ENCODE measurements at regions of chr1 and their contacts with region 1.

Region 1: GRCh38 chr1:156338180-156338973 is at the starts of genes CCT3 and TSACC:
- DNase-seq: peak; percentile 97 to 100 (median 99)
- ATAC-seq: peak; percentile 95
- H3K4me3 ChIP-seq: peak within 1 kb of the TSS; percentile 69 to 85
- H3K4me3 Mint-ChIP-seq: peak within 1 kb of the TSS; percentile 95
- H3K27ac ChIP-seq: peak within 1 kb of the TSS; percentile 61 to 92
- H3K27ac Mint-ChIP-seq: peak within 1 kb of the TSS; percentile 95
- H3K4me1 ChIP-seq: peaks cover 25% of the 10 kb centered on the region
- H3K4me1 Mint-ChIP-seq: peaks cover 39% of the 10 kb centered on the region
- H3K27me3 ChIP-seq: no peaks in the 10 kb centered on the region
- H3K27me3 Mint-ChIP-seq: no peaks in the 10 kb centered on the region
- CTCF ChIP-seq: no peak
- total RNA-seq, gene CCT3: 49.2 to 53.4 TPM
- total RNA-seq, gene TSACC: 0.46 TPM in 1 of 2 experiments, not detected in the other

Region 2: DNA sequence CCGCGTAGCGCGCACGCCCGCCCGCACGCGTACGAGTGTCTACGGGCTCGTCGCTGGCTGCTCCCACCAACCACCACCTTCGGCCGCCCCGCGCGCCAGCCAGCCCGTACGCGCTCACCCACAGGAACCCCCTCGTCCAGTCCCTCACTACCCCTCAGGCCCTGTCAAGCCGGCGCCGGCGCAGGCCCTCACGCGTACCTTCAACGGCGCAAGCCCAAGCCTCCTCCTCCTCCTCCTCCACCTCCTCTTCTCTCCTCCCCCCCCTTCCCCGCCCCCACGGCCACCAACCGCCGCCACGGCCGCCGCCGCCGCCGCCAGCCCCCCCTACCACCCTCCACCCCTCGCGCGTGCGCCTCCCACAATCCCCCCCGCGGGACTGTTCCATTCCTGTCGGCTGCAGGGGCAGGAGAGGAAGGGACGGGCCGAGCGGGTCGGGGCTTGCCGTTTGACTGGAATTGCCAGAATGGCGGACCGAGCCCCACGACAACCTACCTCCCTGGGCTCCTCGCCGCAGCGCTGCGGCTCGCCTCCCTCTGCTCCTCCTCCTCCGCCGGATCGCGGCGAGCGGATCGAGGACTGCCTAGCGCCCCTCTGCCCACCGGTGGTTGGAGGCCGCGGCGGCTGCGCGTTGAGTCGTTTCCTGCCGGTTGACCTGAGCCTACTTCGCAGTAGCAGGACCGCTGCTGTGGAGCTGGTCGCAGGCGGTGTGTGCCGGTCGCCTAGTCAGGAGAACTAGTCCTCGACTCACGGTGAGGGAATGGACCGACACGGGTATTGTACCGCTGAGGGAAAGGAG is 775.6 kb before region 1 on chr1 and contains the start of gene ASH1L:
- CTCF ChIA-PET with region 1: no interaction called
- POLR2A ChIA-PET with region 1: no interaction called
- intact Hi-C with region 1: loop called in 1 of 2 experiments (anchors 10 kb)
- DNase-seq: peak; percentile 89 to 98 (median 94)
- ATAC-seq: peak; percentile 73
- H3K4me3 ChIP-seq: peak within 1 kb of the TSS; percentile 91 to 100
- H3K4me3 Mint-ChIP-seq: peak within 1 kb of the TSS; percentile 99
- H3K27ac ChIP-seq: peak within 1 kb of the TSS; percentile 97 to 98
- H3K27ac Mint-ChIP-seq: peak within 1 kb of the TSS; percentile 98
- H3K4me1 ChIP-seq: peaks cover 38% of the 10 kb centered on the region
- H3K4me1 Mint-ChIP-seq: peaks cover 53% of the 10 kb centered on the region
- H3K27me3 ChIP-seq: no peaks in the 10 kb centered on the region
- H3K27me3 Mint-ChIP-seq: no peaks in the 10 kb centered on the region
- CTCF ChIP-seq: no peak
- total RNA-seq, gene ASH1L: 54.6 to 58.9 TPM

Region 3: DNA sequence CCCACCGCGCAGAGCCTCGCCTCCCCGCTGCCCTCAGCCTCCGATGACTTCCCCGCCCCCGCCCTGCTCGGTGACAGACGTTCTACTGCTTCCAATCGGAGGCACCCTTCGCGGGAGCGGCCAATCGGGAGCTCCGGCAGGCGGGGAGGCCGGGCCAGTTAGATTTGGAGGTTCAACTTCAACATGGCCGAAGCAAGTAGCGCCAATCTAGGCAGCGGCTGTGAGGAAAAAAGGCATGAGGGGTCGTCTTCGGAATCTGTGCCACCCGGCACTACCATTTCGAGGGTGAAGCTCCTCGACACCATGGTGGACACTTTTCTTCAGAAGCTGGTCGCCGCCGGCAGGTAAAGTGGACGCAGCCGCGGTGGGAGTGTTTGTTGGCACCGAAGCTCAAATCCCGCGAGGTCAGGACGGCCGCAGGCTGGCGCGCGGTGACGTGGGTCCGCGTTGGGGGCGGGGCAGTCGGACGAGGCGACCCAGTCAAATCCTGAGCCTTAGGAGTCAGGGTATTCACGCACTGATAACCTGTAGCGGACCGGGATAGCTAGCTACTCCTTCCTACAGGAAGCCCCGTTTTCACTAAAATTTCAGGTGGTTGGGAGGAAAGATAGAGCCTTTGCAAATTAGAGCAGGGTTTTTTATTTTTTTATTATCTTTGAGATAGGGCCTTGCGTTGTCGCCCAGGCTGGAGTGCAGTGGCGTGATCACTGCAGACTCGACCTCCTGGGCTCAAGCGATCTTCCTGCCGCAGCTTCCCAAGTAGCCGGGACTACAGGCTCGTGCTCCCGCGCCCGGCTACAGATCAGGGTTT is 125.3 kb before region 1 on chr1 and contains the start of gene PMF1:
- CTCF ChIA-PET with region 1: no interaction called
- POLR2A ChIA-PET with region 1: no interaction called
- intact Hi-C with region 1: loop called (anchors 1 kb)
- DNase-seq: peak; percentile 89 to 97 (median 95)
- ATAC-seq: peak; percentile 95
- H3K4me3 ChIP-seq: peak within 1 kb of the TSS; percentile 70 to 79
- H3K4me3 Mint-ChIP-seq: peak within 1 kb of the TSS; percentile 97
- H3K27ac ChIP-seq: peak within 1 kb of the TSS; percentile 92 to 95
- H3K27ac Mint-ChIP-seq: peak within 1 kb of the TSS; percentile 99
- H3K4me1 ChIP-seq: peaks cover 24% of the 10 kb centered on the region
- H3K4me1 Mint-ChIP-seq: peaks cover 31% of the 10 kb centered on the region
- H3K27me3 ChIP-seq: no peaks in the 10 kb centered on the region
- H3K27me3 Mint-ChIP-seq: no peaks in the 10 kb centered on the region
- CTCF ChIP-seq: no peak
- total RNA-seq, gene PMF1: 72.1 to 74.4 TPM

Region 4: GRCh38 chr1:156456622-156457465 is 118.5 kb after region 1 on chr1:
- CTCF ChIA-PET with region 1: no interaction called
- POLR2A ChIA-PET with region 1: no interaction called
- intact Hi-C with region 1: loop called in 1 of 2 experiments (anchors 2 kb)
- DNase-seq: peak; percentile 92 to 99 (median 96)
- ATAC-seq: peak; percentile 84
- H3K4me3 ChIP-seq: peak overlapping the region; percentile 57 to 62
- H3K4me3 Mint-ChIP-seq: peak overlapping the region; percentile 93
- H3K27ac ChIP-seq: peak overlapping the region; percentile 83 to 89
- H3K27ac Mint-ChIP-seq: peak overlapping the region; percentile 100
- H3K4me1 ChIP-seq: peaks cover 4% of the 10 kb centered on the region
- H3K4me1 Mint-ChIP-seq: peaks cover 17% of the 10 kb centered on the region
- H3K27me3 ChIP-seq: no peaks in the 10 kb centered on the region
- H3K27me3 Mint-ChIP-seq: no peaks in the 10 kb centered on the region
- CTCF ChIP-seq: no peak

Region 5: GRCh38 chr1:156767101-156767878 is 428.9 kb after region 1 on chr1 and contains the start of gene PRCC:
- CTCF ChIA-PET with region 1: no interaction called
- POLR2A ChIA-PET with region 1: no interaction called
- intact Hi-C with region 1: loop called in 1 of 2 experiments (anchors 1 kb)
- DNase-seq: peak; percentile 93 to 100 (median 97)
- ATAC-seq: peak; percentile 90
- H3K4me3 ChIP-seq: peak within 1 kb of the TSS; percentile 66 to 69
- H3K4me3 Mint-ChIP-seq: no peak within 1 kb of the TSS
- H3K27ac ChIP-seq: peak within 1 kb of the TSS; percentile 87 to 90
- H3K27ac Mint-ChIP-seq: no peak within 1 kb of the TSS
- H3K4me1 ChIP-seq: peaks cover 29% of the 10 kb centered on the region
- H3K4me1 Mint-ChIP-seq: peaks cover 41% of the 10 kb centered on the region
- H3K27me3 ChIP-seq: no peaks in the 10 kb centered on the region
- H3K27me3 Mint-ChIP-seq: no peaks in the 10 kb centered on the region
- CTCF ChIP-seq: no peak
- total RNA-seq, gene PRCC: 55.6 to 58.4 TPM